ENCODE measurements at regions of chr10 and their contacts with region 1.

Region 1: GRCh38 chr10:33115738-33116719 is 158.0 kb upstream of the ITGB1 start:
- DNase-seq: peak; percentile 54
- ATAC-seq: peak; percentile 84
- H3K4me3 Mint-ChIP-seq: no peak overlapping the region
- H3K27ac Mint-ChIP-seq: no peak overlapping the region
- H3K4me1 Mint-ChIP-seq: peaks cover 15% of the 10 kb centered on the region
- H3K27me3 Mint-ChIP-seq: no peaks in the 10 kb centered on the region
- CTCF ChIP-seq: peak; percentile 38; the same call in 1 of the 2 replicates

Region 2: GRCh38 chr10:33066558-33067236 is 49.3 kb before region 1 on chr10:
- CTCF ChIA-PET with region 1: interaction called, 12 read pairs
- POLR2A ChIA-PET with region 1: no interaction called
- DNase-seq: no peak
- ATAC-seq: peak; percentile 74
- H3K4me3 Mint-ChIP-seq: no peak overlapping the region
- H3K27ac Mint-ChIP-seq: no peak overlapping the region
- H3K4me1 Mint-ChIP-seq: peaks cover 8% of the 10 kb centered on the region
- H3K27me3 Mint-ChIP-seq: no peaks in the 10 kb centered on the region
- CTCF ChIP-seq: no peak

Region 3: DNA sequence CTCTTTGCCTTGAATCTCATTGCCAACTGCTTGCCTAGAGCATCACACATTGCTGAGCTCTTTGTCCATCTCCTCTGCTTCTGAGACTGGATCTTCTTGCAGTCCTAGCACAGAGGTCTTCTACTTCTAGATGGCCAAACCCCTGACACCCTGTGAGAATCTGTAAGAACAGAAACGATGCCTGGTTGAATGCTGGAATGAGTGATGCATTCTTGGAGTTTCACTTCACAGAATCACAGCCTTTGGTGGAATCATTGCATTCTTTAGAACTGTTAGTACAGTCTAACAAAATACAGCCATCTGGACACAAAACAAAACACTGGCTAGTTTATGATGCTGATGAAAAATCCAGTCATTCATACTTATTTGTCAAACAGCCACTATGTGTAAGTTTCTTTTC is 16.3 kb before region 1 on chr10:
- CTCF ChIA-PET with region 1: interaction called, 14 read pairs
- POLR2A ChIA-PET with region 1: interaction called, 3 read pairs
- DNase-seq: no peak
- ATAC-seq: no peak
- H3K4me3 Mint-ChIP-seq: no peak overlapping the region
- H3K27ac Mint-ChIP-seq: no peak overlapping the region
- H3K4me1 Mint-ChIP-seq: peaks cover 20% of the 10 kb centered on the region
- H3K27me3 Mint-ChIP-seq: peaks cover 3% of the 10 kb centered on the region
- CTCF ChIP-seq: no peak

Region 4: DNA sequence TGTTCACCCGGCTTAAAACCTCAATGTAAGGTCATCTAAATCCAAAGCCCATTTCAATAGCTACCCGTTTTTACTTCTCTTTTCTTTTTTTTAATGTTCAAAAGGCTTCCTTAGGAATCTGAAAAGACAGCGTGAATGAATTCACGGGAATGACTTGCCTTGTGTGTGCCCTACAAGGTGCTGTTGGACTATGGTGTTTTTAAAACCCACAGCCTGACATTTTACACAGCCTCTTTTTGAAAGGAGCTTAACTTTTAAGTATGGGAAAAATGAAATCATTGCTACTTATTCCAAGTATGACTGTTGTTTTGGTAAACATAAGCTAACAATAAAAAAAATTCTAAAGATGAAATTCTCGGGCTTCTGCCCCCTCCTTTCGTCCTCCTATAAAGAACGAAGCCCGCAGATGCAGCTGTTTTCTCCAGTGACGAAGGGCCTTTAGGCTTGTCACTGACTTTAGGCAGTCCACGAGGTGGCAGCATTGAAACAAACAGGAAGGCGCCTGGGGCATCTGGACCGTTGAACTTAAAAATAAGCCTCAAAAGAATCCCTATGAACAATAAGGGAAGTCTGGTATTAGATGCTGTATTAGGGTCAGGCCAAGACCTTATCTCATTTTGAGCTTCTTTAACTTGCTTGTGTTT is 77.2 kb after region 1 on chr10:
- CTCF ChIA-PET with region 1: interaction called, 11 read pairs
- POLR2A ChIA-PET with region 1: no interaction called
- DNase-seq: peak; percentile 71
- ATAC-seq: peak; percentile 89
- H3K4me3 Mint-ChIP-seq: no peak overlapping the region
- H3K27ac Mint-ChIP-seq: no peak overlapping the region
- H3K4me1 Mint-ChIP-seq: peaks cover 26% of the 10 kb centered on the region
- H3K27me3 Mint-ChIP-seq: peaks cover 4% of the 10 kb centered on the region; the same call in 1 of the 2 replicates
- CTCF ChIP-seq: peak; percentile 27; the same call in 1 of the 2 replicates